ENCODE measurements at regions of chr10 and their contacts with region 1.

Region 1: DNA sequence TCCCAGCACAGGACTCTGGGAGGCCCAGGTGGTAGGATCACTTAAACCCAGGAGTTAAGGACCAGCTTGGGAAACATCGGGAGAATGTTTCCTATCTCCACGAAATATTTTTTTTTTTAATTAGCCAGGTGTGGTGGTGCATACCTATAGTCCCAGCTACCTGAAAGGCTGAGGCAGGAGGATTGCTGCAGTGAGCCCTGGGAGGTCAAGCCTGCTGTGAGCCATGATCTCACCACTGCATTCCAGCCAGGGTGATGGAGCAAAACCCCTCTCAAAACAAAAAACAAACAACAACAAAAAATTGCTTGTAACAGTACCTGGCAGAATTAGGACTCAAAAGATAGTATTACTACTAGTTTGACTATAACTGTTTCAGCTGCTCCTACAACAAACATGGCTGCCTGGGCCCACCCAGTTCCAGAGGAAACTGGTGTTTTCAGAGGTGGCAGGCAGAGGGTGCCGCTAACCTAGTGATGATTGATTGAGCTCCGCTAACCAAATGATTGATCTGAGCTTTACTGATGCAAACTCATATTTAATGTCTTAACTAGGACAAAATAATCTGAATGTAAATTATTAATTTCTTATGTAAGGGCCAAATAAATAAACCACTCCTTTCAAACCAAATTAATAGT is 57.0 kb downstream of the AP3M1 start:
- DNase-seq: no peak
- ATAC-seq: no peak
- H3K4me3 Mint-ChIP-seq: no peak overlapping the region
- H3K27ac Mint-ChIP-seq: no peak overlapping the region
- H3K4me1 Mint-ChIP-seq: no peaks in the 10 kb centered on the region
- H3K27me3 Mint-ChIP-seq: no peaks in the 10 kb centered on the region
- CTCF ChIP-seq: no peak

Region 2: GRCh38 chr10:73798927-73799563 is 294.6 kb before region 1 on chr10:
- CTCF ChIA-PET with region 1: no interaction called
- POLR2A ChIA-PET with region 1: no interaction called
- intact Hi-C with region 1: no loop called
- DNase-seq: no peak
- ATAC-seq: peak; percentile 17
- H3K4me3 Mint-ChIP-seq: no peak overlapping the region
- H3K27ac Mint-ChIP-seq: no peak overlapping the region
- H3K4me1 Mint-ChIP-seq: peaks cover 11% of the 10 kb centered on the region
- H3K27me3 Mint-ChIP-seq: no peaks in the 10 kb centered on the region
- CTCF ChIP-seq: no peak

Region 3: GRCh38 chr10:73965890-73966768 is 127.5 kb before region 1 on chr10:
- CTCF ChIA-PET with region 1: no interaction called
- POLR2A ChIA-PET with region 1: no interaction called
- intact Hi-C with region 1: no loop called
- DNase-seq: no peak
- ATAC-seq: no peak
- H3K4me3 Mint-ChIP-seq: no peak overlapping the region
- H3K27ac Mint-ChIP-seq: no peak overlapping the region
- H3K4me1 Mint-ChIP-seq: peaks cover 4% of the 10 kb centered on the region
- H3K27me3 Mint-ChIP-seq: no peaks in the 10 kb centered on the region
- CTCF ChIP-seq: no peak

Region 4: DNA sequence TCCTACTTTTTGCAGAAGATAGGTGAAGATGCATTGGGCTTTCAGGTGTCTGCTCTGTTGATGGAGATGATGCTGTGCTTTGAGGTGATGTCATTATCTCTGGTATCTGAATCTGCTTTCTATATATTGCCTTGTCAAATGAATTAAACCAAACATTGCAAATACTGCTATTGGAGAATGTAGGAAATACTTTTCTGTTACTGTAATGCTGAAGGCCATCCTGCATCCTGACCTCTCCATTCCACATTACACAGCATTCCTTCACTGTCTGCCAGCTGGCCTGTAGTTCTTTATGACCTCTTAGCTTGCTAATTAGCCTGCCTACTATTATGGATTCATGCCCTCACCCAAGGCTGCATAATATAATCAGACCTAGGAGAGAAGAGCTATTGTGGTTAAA is 22.5 kb before region 1 on chr10:
- CTCF ChIA-PET with region 1: no interaction called
- POLR2A ChIA-PET with region 1: no interaction called
- intact Hi-C with region 1: no loop called
- DNase-seq: no peak
- ATAC-seq: no peak
- H3K4me3 Mint-ChIP-seq: no peak overlapping the region
- H3K27ac Mint-ChIP-seq: no peak overlapping the region
- H3K4me1 Mint-ChIP-seq: peaks cover 7% of the 10 kb centered on the region
- H3K27me3 Mint-ChIP-seq: no peaks in the 10 kb centered on the region
- CTCF ChIP-seq: no peak

Region 5: DNA sequence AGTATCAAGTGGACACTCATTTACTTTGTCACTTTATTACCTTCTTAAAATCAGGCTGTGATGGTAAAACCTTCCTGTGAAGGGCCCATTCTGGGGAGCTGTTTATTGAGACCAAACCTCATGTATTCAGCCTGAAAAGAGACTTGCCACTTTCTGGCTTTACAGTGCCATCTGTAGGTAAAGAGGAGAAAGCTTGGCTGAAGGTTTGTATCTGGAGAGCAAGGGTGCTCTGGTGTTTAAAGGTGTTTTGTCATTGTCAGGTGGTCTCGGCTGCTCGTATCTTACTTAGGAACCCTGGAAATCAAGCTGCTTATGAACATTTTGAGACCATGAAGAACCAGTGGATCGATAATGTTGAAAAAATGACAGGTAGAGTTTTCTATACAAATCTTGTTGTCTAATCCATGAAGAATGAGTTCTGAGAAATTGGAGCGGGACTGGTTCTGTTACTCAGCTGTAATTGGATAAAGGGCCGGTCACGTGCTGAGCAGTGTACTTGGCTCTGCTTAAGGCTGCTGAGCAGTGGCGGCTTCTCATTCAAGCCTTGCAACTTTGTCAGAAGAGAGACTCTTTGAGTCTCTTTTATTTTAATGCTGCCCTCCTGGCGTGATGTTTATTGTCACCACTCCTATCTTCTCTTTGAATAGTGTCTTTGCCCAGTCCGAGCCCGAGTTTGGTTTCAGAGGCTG is 10.1 kb after region 1 on chr10:
- CTCF ChIA-PET with region 1: interaction called, 11 read pairs
- POLR2A ChIA-PET with region 1: no interaction called
- intact Hi-C with region 1: no loop called
- DNase-seq: no peak
- ATAC-seq: peak; percentile 47
- H3K4me3 Mint-ChIP-seq: no peak overlapping the region
- H3K27ac Mint-ChIP-seq: no peak overlapping the region
- H3K4me1 Mint-ChIP-seq: no peaks in the 10 kb centered on the region
- H3K27me3 Mint-ChIP-seq: no peaks in the 10 kb centered on the region
- CTCF ChIP-seq: peak; percentile 32